Naive thymus-derived CD8-positive, alpha-beta T cell (primary cell): ENCODE measurements at regions of chr6 and their contacts with region 1.

Region 1: GRCh38 chr6:26196846-26197648 is 109.8 kb downstream of the HFE start:
- DNase-seq: peak; percentile 55 to 95 (median 86)
- ATAC-seq: peak; percentile 57 to 62
- H3K4me3 Mint-ChIP-seq: peak overlapping the region; percentile 88 to 99 (median 96)
- H3K27ac Mint-ChIP-seq: peak overlapping the region; percentile 94 to 99 (median 98)
- H3K4me1 Mint-ChIP-seq: peaks cover 25 to 46% (median 42%) of the 10 kb centered on the region in 4 donors
- H3K27me3 Mint-ChIP-seq: no peaks in the 10 kb centered on the region

Region 2: GRCh38 chr6:26054857-26055669 is 142.0 kb before region 1 on chr6:
- POLR2A ChIA-PET with region 1: interaction called, 61 read pairs
- DNase-seq: peak; percentile 63 to 95 (median 87)
- ATAC-seq: peak; percentile 65 to 70
- H3K4me3 Mint-ChIP-seq: peak overlapping the region; percentile 93 to 99 (median 96)
- H3K27ac Mint-ChIP-seq: peak overlapping the region; percentile 93 to 99 (median 99)
- H3K4me1 Mint-ChIP-seq: peaks cover 9 to 34% (median 21%) of the 10 kb centered on the region in 4 donors
- H3K27me3 Mint-ChIP-seq: no peaks in the 10 kb centered on the region

Region 3: DNA sequence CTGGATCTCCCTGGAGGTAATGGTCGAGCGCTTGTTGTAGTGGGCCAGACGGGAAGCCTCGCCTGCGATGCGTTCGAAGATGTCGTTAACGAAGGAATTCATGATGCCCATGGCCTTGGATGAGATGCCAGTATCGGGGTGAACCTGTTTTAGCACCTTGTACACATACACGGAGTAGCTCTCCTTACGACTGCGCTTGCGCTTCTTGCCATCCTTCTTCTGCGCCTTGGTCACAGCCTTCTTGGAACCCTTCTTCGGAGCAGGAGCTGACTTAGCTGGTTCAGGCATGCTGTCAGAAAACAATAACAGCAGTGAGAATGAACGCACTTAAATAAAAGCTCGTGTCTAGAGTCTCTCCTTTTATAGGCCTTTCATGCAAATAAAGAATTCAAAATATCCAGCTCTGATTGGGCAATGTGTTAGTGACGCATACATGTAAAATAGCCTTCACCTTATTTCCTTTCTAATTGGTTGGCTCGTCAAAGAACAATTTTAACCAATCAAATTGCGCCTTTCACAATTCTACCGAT is 19.4 kb after region 1 on chr6:
- POLR2A ChIA-PET with region 1: interaction called, 603 read pairs
- DNase-seq: peak; percentile 34 to 95 (median 86)
- ATAC-seq: peak; percentile 81 to 84
- H3K4me3 Mint-ChIP-seq: no peak overlapping the region
- H3K27ac Mint-ChIP-seq: no peak overlapping the region
- H3K4me1 Mint-ChIP-seq: peaks cover 0 to 12% (median 7%) of the 10 kb centered on the region in 4 donors
- H3K27me3 Mint-ChIP-seq: no peaks in the 10 kb centered on the region

Region 4: GRCh38 chr6:26285143-26286134 is 88.4 kb after region 1 on chr6:
- POLR2A ChIA-PET with region 1: interaction called, 107 read pairs
- DNase-seq: peak; percentile 80 to 99 (median 93)
- ATAC-seq: peak; percentile 77 to 87
- H3K4me3 Mint-ChIP-seq: peak overlapping the region; percentile 84 to 96 (median 91)
- H3K27ac Mint-ChIP-seq: peak overlapping the region; percentile 95 to 100 (median 98)
- H3K4me1 Mint-ChIP-seq: peaks cover 19 to 36% (median 29%) of the 10 kb centered on the region in 4 donors
- H3K27me3 Mint-ChIP-seq: peaks cover 0 to 7% (median 0%) of the 10 kb centered on the region in 5 donors

Region 5: DNA sequence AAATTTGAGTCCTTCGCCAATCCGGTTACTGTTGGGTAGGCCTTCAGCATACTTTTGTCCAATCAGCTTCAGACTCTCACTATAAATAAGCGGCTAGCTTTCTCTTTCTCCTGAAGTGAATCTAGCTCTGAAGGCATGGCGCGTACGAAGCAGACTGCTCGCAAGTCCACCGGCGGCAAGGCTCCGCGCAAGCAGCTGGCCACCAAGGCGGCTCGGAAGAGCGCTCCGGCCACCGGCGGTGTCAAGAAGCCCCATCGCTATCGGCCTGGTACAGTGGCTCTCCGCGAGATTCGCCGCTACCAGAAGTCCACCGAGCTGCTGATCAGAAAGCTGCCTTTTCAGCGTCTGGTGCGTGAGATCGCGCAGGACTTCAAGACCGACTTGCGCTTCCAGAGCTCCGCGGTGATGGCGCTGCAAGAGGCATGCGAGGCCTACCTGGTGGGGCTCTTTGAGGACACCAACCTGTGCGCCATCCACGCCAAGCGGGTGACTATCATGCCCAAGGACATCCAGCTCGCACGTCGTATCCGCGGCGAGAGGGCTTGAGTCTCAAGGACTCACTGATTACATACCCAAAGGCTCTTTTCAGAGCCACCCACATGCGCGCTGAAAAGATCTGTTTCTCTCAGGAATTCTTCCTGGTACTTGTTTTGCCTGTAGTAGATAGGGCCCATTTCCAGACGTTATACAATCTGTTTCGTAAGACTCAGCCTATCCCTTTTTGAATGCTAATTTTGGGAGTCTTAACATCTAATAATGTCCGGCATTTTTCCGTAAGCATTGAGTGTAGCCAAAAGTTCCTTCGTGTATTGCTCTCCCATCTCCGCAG is 1613.1 kb after region 1 on chr6:
- POLR2A ChIA-PET with region 1: interaction called, 31 read pairs
- DNase-seq: peak; percentile 58 to 95 (median 84)
- ATAC-seq: peak; percentile 63 to 65
- H3K4me3 Mint-ChIP-seq: peak overlapping the region; percentile 90 to 97 (median 96)
- H3K27ac Mint-ChIP-seq: peak overlapping the region; percentile 97 to 99 (median 98)
- H3K4me1 Mint-ChIP-seq: peaks cover 32 to 72% (median 47%) of the 10 kb centered on the region in 4 donors
- H3K27me3 Mint-ChIP-seq: no peaks in the 10 kb centered on the region

Region 6: GRCh38 chr6:27893059-27893835 is 1696.2 kb after region 1 on chr6:
- POLR2A ChIA-PET with region 1: interaction called, 20 read pairs
- DNase-seq: peak; percentile 69 to 96 (median 90)
- ATAC-seq: peak; percentile 72 to 78
- H3K4me3 Mint-ChIP-seq: no peak overlapping the region
- H3K27ac Mint-ChIP-seq: no peak overlapping the region
- H3K4me1 Mint-ChIP-seq: peaks cover 7 to 38% (median 28%) of the 10 kb centered on the region in 4 donors
- H3K27me3 Mint-ChIP-seq: no peaks in the 10 kb centered on the region